ENCODE measurements at regions of chr6 and their contacts with region 1.

Region 1: DNA sequence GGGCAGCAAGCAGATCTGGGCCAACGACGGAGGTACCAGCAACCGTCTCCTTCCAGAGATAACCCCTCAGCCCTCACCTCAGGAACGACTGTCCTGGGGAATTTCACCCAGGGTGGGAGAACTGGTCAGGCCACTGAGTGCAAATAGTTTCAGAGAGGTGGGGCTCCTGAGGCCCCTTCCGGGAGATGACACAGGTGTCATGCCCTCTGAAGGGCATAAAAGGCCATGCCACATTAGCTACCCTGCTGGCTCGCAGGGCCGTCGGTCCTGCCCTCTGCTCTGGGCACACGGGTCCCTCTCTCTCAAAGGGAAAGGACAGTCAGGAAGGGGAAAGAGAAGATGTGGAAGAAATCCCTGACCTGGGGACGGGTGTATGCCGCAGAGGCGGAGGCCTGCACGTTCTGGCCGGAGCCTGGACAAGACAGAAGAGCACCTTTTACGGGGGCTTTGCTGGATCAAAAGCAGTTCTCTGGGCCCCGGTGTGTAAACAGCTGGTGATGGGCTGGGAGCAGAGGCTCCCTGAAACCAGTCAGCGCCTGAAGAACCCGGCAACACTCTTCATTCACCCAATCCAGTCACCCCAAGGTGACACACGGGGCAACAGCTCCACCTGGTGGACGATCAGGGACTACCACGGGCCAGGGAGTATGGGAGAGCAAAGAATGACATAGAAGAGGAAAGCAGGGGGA is 6.4 kb upstream of the TAF8 start:
- DNase-seq: peak; percentile 95

Region 2: DNA sequence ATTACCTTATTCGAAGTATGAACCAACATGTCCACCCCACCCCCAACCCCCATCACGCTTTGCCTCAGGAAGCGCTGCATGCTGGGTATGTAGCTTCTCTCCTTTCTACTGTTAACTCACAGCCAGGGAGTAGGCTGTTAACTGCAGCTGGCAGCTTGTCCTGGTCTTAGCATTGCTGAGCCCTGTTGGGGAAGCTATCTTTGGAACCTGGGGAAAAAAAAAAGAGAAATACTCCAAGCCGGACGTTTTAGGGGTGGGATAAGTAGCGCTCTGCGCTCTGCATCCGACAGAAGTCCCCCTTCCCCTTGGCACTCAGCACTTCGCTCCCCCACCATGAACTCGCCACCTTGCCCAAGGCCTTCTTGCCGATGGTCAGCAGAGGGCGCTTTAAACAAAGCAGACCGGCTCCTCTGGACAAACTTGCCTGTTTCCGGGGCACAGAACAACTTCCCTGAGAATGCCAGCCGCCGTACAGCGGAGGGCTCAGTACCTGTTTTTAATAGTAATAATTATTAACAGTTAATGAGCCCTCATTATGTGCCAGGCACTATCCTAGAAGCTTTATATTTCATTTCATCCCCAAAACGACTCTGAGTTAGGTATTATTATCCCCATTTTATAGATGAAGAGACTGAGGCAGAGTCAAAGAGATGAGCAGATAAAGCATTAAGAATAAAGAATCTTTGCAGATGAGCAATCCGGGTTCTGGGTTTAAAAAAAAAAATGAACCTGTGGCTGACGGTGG is 440.9 kb before region 1 on chr6:
- intact Hi-C with region 1: loop called (anchors 10 kb)
- DNase-seq: peak; percentile 90

Region 3: GRCh38 chr6:41705996-41706835 is 337.7 kb before region 1 on chr6:
- intact Hi-C with region 1: loop called (anchors 10 kb)
- DNase-seq: peak; percentile 93

Region 4: DNA sequence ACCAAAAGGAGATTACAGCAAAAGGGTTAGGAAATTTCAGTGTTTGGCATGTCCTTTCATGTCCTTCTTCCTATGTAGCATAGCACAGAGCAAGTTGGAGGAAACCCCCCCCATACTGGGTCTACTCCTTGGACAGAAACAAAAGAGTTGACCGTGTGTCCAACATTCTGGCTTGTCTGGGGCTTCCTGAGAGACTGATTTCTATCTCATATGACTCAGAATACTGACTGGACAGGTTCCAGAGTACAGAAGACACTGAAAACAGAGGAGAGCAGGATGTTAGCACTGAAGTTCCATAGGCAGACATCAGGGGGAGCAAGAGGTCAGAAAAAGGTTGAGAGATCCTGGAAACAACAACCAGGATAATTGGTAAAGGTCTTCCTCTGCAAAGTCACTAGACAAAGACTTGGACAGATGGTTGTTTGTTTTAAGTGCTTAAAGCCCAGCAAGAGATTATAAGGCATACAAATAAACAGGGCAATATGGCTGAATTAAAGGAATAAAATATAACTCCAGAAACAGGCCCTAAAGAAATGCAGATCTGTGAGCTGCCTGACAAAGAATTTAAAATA is 197.2 kb before region 1 on chr6:
- intact Hi-C with region 1: loop called (anchors 1 kb)
- DNase-seq: no peak

Region 5: GRCh38 chr6:41920921-41921711 is 122.8 kb before region 1 on chr6 and contains the starts of genes BYSL and MED20:
- intact Hi-C with region 1: loop called (anchors 5 kb)
- DNase-seq: peak; percentile 97
- total RNA-seq, gene BYSL: 11.3 TPM
- total RNA-seq, gene MED20: 16.5 TPM

Region 6: DNA sequence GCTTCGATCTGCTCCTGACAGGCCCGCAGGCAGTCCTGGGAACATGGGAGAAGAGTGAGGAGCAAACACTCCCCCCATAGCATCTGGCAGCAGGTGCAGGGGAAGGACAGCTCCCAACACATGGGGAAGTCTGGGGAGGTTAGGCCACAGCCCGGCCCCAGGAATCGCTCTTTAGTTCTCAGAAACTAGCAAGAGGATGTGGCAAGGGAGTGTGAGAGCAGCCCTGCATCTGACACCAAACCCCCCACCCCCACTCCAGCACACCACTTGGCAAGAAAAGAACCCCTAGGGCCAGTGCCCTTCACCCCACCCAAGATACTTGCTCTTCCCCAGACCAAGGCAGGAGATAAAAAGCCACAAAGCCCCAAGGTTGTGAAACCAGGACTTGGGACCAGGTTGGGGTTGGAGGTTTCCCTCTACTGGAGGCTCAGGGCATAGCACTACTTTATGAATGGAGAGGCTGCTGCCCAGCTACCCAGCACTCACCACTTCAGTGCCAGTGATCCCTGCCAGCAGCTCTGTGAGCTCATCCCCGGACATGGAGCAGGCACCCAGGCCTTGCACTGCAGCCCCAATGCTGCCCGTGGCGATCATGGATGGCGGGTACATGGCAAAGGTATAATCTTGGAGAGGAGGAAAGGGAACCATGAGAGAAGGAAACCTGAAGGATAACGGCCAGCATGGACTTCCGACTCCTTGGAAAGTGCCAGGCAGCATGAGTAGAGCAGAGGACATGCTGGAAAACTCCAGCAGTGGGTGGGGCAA is 107.7 kb before region 1 on chr6:
- intact Hi-C with region 1: loop called (anchors 2 kb)
- DNase-seq: peak; percentile 88

Region 7: GRCh38 chr6:42175860-42176259 is 131.9 kb after region 1 on chr6:
- intact Hi-C with region 1: no loop called
- DNase-seq: no peak